Activated naive CD4-positive, alpha-beta T cell treated with anti-CD3 and anti-CD28 coated beads for 36 hours (primary cell): ENCODE measurements at regions of chr6 and their contacts with region 1.

Region 1: GRCh38 chr6:150004783-150005717 is 20.3 kb downstream of the RAET1L start:
- DNase-seq: peak; percentile 94
- H3K4me3 Mint-ChIP-seq: peak overlapping the region; percentile 86
- H3K27ac Mint-ChIP-seq: no peak overlapping the region
- H3K4me1 Mint-ChIP-seq: peaks cover 51% of the 10 kb centered on the region
- H3K27me3 Mint-ChIP-seq: peaks cover 26% of the 10 kb centered on the region

Region 2: DNA sequence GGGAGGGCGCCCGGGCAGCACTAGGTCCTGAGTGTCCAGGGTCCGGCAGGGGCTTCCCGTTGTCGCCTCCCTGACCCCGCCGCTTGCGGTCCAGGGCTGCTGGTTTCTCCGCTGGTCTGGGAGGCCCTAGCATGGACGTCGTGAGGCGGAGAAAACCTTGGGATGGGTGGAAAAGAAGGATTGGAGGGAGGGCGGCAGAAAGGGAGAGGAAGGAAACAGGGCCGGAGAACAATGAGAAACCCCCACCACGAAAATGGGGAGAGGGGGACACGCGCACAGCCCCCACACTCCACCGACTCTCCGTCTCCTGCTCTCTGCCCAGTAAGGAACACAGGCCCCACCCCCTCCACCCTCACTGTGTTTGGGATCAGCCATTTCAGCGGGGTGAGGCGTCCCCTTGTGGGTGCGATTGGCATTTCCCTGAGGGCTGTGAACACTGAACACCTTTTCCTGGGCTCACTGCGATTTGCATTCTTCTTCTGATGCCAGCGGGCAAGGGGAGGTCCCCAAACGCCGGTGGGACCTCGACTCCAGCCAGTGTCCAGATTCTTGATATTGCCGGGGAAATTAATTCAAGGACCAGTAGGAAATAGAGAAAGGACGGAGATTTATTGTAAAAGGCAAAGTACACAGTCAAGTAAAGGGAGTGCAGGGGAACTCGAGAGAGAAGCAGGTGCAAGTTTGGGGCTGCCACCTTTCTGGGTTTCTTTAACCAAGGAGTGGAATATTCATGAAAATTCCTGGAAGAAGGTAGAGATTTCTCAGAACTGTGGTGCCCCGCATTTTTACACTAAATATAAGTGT is 78.9 kb before region 1 on chr6:
- CTCF ChIA-PET with region 1: no interaction called
- intact Hi-C with region 1: no loop called
- DNase-seq: peak; percentile 93
- H3K4me3 Mint-ChIP-seq: peak overlapping the region; percentile 44
- H3K27ac Mint-ChIP-seq: no peak overlapping the region
- H3K4me1 Mint-ChIP-seq: peaks cover 15% of the 10 kb centered on the region
- H3K27me3 Mint-ChIP-seq: peaks cover 78% of the 10 kb centered on the region

Region 3: GRCh38 chr6:149941583-149942431 is 63.2 kb before region 1 on chr6 and contains the start of gene ULBP2:
- CTCF ChIA-PET with region 1: interaction called, 3 read pairs
- intact Hi-C with region 1: loop called (anchors 1 kb)
- DNase-seq: peak; percentile 96
- H3K4me3 Mint-ChIP-seq: peak within 1 kb of the TSS; percentile 89
- H3K27ac Mint-ChIP-seq: no peak within 1 kb of the TSS
- H3K4me1 Mint-ChIP-seq: peaks cover 32% of the 10 kb centered on the region
- H3K27me3 Mint-ChIP-seq: peaks cover 46% of the 10 kb centered on the region
- total RNA-seq, gene ULBP2: 0.69 to 1.4 TPM

Region 4: GRCh38 chr6:149990618-149991471 is 14.2 kb before region 1 on chr6:
- CTCF ChIA-PET with region 1: interaction called, 8 read pairs
- intact Hi-C with region 1: loop called (anchors 1 kb)
- DNase-seq: peak; percentile 33
- H3K4me3 Mint-ChIP-seq: peak overlapping the region; percentile 53
- H3K27ac Mint-ChIP-seq: no peak overlapping the region
- H3K4me1 Mint-ChIP-seq: peaks cover 24% of the 10 kb centered on the region
- H3K27me3 Mint-ChIP-seq: peaks cover 83% of the 10 kb centered on the region

Region 5: DNA sequence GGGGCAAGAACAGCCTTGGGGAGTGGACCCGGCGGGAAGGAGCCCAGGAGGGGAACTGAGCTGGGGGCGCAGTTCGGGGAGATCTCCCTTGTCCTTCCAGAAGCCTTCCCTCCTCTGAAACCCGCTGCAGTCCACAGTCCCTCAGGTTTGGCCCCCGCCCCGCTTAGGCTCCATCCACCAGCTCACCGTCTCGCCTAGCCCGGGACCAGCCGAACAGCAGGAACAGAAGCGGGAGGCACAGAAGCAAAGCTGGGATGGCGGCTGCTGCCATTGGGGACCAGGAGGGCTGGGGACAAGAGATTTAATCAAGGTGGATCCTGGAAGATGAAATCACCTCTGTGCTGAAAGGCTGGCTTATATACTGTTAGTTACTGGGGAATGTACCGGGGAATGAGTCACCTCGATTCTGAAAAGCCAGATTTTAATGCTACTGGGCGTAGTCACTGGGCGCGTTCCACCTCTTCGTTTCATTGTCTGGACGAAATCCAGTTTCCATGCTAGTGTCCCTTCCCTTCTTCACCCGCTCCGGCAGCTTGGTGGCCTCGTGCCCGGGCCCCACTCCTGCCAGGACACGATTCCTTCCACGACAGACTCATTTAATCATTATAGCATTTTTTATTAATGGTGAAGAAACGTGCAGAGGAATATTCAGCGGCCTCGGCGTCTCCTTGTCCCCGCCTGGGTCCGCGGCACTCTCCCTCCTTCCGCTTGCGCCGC is 20.3 kb after region 1 on chr6 and contains the start of gene RAET1L:
- CTCF ChIA-PET with region 1: interaction called, 3 read pairs
- intact Hi-C with region 1: loop called (anchors 2 kb)
- DNase-seq: peak; percentile 78
- H3K4me3 Mint-ChIP-seq: no peak within 1 kb of the TSS
- H3K27ac Mint-ChIP-seq: peak within 1 kb of the TSS; percentile 61
- H3K4me1 Mint-ChIP-seq: peaks cover 16% of the 10 kb centered on the region
- H3K27me3 Mint-ChIP-seq: peaks cover 44% of the 10 kb centered on the region
- total RNA-seq, gene RAET1L: not detected

Region 6: DNA sequence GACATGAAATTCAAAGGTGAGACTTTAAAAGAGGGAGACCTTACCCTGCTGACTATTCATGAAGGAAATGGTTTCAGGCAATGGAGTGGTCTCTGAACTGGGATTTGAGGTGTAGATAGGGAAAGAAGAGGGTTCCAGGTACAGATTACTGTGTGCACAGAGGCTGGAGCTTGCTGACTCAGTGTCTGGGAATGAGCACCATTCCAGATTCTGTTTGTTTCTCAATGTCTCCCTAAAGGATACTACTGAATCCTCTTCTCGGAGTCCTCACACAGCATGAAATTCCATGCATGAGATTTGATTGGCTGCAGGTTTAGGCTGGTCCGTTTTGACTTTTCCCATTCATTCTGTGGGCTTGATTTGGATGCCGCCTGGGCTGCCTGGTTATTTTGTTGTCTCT is 186.8 kb after region 1 on chr6:
- CTCF ChIA-PET with region 1: no interaction called
- intact Hi-C with region 1: no loop called
- DNase-seq: no peak
- H3K4me3 Mint-ChIP-seq: no peak overlapping the region
- H3K27ac Mint-ChIP-seq: no peak overlapping the region
- H3K4me1 Mint-ChIP-seq: no peaks in the 10 kb centered on the region
- H3K27me3 Mint-ChIP-seq: peaks cover 34% of the 10 kb centered on the region